ENCODE measurements at regions of chr19 and their contacts with region 1.

Region 1: GRCh38 chr19:10695401-10696398 is 5.5 kb upstream of the QTRT1 start:
- H3K4me3 ChIP-seq: no peak overlapping the region; the same call in 1 of the 2 replicates
- H3K27ac ChIP-seq: no peak overlapping the region
- H3K4me1 ChIP-seq: peaks cover 3% of the 10 kb centered on the region; the same call in 1 of the 2 replicates
- CTCF ChIP-seq: peak; percentile 52; the same call in 1 of the 2 replicates

Region 2: DNA sequence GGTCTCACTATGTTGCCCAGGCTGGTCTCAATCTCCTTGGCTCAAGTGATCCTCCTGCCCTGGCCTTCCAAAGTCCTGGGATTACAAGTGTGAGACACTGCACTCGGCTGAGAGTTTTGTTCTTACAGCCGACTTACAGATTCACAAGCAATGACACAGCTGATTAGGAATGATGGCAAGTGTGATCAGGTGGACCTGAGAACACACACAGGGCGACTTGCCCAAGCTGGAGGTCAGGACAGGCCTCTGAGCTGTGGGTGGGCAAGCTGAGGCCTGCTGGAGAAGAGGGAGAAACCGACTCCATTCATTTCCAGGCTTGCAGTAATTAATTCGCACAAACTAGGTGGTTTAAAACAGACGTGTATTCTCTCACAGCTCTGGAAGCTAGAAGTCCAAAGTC is 160.1 kb before region 1 on chr19:
- CTCF ChIA-PET with region 1: interaction called, 5 read pairs
- POLR2A ChIA-PET with region 1: interaction called, 14 read pairs
- H3K4me3 ChIP-seq: no peak overlapping the region
- H3K27ac ChIP-seq: no peak overlapping the region
- H3K4me1 ChIP-seq: no peaks in the 10 kb centered on the region
- CTCF ChIP-seq: no peak

Region 3: GRCh38 chr19:10644260-10645007 is 51.3 kb before region 1 on chr19:
- CTCF ChIA-PET with region 1: interaction called, 29 read pairs
- POLR2A ChIA-PET with region 1: no interaction called
- H3K4me3 ChIP-seq: no peak overlapping the region
- H3K27ac ChIP-seq: no peak overlapping the region
- H3K4me1 ChIP-seq: no peaks in the 10 kb centered on the region
- CTCF ChIP-seq: peak; percentile 95

Region 4: DNA sequence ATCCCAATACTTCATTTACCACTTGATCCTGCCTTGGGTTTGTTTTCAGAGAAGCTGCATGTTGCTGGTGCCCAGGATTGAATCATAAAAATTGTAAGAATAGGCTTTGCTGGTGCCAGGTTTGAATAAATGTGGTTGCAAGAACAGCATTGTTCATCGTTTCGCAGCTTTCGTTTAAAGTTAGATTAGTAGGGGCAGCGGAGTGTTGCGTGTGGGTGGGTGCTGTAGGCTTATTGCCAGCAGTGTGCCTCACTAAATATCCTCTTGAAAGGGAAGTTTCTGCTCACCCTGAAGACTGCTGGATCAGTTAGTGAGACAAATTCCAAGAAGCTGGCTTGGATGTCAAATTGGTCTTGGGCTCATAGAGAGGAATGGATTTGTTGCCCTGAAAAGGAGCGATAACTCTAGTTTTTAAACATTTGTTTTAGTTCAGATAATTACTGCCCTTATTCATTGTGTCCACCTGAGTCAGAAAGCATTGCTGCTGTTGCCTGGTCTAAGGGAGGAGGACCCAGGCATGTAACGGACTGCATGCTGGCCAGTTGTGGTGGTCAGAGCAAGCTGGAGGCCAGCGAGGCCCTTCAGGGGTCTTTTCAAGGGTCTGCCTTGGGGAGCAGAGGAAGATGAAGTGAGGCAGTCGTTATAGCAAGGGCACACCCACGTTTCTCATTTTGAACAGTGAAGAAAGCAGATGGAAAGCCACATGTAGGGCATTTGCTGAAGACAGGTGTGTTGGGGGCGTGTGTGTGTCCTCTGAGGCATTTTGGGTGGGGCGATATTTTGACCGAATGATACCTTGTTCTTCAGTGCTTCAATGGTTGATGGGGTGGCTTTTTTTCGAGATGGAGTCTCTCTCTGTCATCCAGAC is 33.1 kb before region 1 on chr19:
- CTCF ChIA-PET with region 1: interaction called, 15 read pairs
- POLR2A ChIA-PET with region 1: interaction called, 4 read pairs
- H3K4me3 ChIP-seq: no peak overlapping the region
- H3K27ac ChIP-seq: peak overlapping the region; percentile 36
- H3K4me1 ChIP-seq: peaks cover 20% of the 10 kb centered on the region
- CTCF ChIP-seq: no peak

Region 5: DNA sequence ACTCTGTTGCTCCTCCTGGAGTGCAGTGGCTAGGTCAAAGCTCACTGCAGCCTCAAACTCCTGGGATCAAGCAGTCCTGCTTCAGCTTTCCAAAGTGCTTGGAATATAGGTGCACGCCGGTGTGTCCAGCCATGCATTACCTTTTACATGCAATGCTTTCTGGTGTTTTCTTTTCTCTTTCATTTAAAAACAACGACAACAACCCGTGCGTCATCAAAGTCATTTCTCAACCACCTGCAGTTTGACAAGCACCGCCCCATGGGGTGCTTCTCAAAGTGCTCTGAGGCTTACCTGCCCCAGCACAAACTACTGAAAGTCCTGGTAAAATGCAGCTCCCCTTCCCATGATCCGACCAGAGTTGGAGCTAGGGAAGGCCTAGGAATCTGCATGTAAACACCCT is 12.6 kb after region 1 on chr19:
- CTCF ChIA-PET with region 1: interaction called, 12 read pairs
- POLR2A ChIA-PET with region 1: interaction called, 3 read pairs
- H3K4me3 ChIP-seq: no peak overlapping the region
- H3K27ac ChIP-seq: no peak overlapping the region
- H3K4me1 ChIP-seq: no peaks in the 10 kb centered on the region
- CTCF ChIP-seq: no peak

Region 6: GRCh38 chr19:10784257-10784656 is 88.6 kb after region 1 on chr19:
- CTCF ChIA-PET with region 1: no interaction called
- POLR2A ChIA-PET with region 1: no interaction called
- H3K4me3 ChIP-seq: no peak overlapping the region
- H3K27ac ChIP-seq: no peak overlapping the region
- H3K4me1 ChIP-seq: no peaks in the 10 kb centered on the region
- CTCF ChIP-seq: no peak

Measured in HEK293 (cell line).